Activated CD4-positive, alpha-beta T cell treated with anti-CD3 and anti-CD28 coated beads for 36 hours (primary cell): ENCODE measurements at regions of chr11 and their contacts with region 1.

Region 1: GRCh38 chr11:64778508-64779346 is at the start of gene SF1:
- DNase-seq: peak; percentile 99
- ATAC-seq: peak; percentile 91
- H3K4me3 Mint-ChIP-seq: peak within 1 kb of the TSS; percentile 97
- H3K27ac Mint-ChIP-seq: peak within 1 kb of the TSS; percentile 99
- H3K4me1 Mint-ChIP-seq: peaks cover 57% of the 10 kb centered on the region
- H3K27me3 Mint-ChIP-seq: no peaks in the 10 kb centered on the region
- total RNA-seq, gene SF1: 318 to 362 TPM

Region 2: DNA sequence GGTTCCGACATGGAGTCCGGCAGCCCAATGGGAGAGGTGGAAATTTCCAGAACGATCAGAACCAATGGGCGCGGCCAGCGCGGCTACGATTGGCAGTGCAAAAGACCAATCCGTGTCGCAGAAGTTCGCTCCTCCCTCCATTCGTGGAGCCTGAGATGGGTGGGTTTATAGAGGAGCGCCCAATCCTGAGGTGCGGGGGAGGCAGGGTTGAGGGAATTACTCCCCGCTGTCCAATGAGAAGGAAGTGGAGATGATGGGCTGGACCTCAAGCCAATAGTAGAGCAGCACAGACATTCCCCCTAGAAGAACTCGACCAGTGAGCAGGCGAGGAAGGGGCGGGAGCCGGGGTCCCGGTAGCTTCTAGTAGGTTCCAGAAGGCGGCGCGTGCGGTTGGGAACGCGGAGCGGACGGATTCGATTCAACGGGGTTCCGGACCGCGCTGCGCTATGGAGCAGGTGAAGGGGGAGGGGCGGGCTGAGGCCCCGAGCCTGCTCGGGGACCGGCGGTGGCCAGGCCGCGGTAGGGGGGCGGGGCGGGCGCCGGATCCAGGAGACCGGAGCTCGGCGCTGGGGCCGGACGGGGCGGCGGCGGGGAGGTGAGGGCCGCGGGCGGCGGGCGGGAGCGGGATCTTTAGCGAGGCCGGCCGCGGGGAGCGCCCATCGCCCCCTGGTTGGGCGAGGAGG is 592.8 kb before region 1 on chr11 and contains the start of gene STIP1:
- CTCF ChIA-PET with region 1: no interaction called
- POLR2A ChIA-PET with region 1: no interaction called
- intact Hi-C with region 1: loop called in 1 of 2 experiments (anchors 2 kb)
- DNase-seq: peak; percentile 99
- ATAC-seq: peak; percentile 92
- H3K4me3 Mint-ChIP-seq: no peak within 1 kb of the TSS
- H3K27ac Mint-ChIP-seq: peak within 1 kb of the TSS; percentile 92
- H3K4me1 Mint-ChIP-seq: peaks cover 42% of the 10 kb centered on the region
- H3K27me3 Mint-ChIP-seq: no peaks in the 10 kb centered on the region
- total RNA-seq, gene STIP1: 398 to 403 TPM

Region 3: DNA sequence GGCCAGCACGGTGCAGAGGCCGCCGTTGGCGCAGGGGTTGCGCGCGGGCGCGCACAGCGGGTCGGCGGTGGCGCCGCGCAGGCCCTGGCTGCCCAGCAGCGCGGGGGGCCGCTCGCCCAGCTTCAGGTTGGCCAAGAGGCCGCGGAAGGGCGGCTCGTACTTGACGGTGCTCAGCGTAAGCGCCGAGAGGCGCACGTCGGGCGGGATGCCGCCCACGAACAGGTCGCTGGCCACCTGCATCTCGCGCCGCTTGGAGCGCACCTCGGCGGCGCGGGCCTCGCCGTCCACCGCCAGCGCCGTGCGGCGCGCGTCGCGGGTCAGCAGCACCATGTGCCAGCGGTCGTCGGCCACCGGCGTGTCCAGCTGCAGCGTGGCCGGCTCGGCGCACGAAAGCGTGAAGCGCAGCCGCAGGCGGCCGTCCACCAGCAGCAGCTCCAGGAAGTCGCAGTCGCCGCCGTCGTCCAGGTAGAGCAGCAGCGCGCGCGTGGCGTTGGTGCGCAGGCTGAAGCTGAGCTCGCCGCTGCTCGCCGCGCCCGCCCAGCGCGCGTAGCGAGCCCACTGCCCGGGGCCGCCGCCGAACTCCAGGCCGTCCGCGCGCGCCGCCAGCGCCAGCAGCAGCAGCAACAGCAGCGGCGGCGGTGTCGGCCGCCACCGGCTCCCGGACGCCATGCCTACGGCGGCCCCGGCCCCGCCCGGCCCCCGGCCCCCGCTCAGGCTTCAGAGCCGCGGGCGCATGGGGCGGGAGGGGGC is 65.5 kb before region 1 on chr11:
- CTCF ChIA-PET with region 1: no interaction called
- POLR2A ChIA-PET with region 1: no interaction called
- intact Hi-C with region 1: no loop called
- DNase-seq: peak; percentile 38
- ATAC-seq: peak; percentile 21
- H3K4me3 Mint-ChIP-seq: no peak overlapping the region
- H3K27ac Mint-ChIP-seq: no peak overlapping the region
- H3K4me1 Mint-ChIP-seq: peaks cover 13% of the 10 kb centered on the region
- H3K27me3 Mint-ChIP-seq: peaks cover 69% of the 10 kb centered on the region

Region 4: GRCh38 chr11:64742889-64743590 is 35.7 kb before region 1 on chr11:
- CTCF ChIA-PET with region 1: interaction called, 6 read pairs
- POLR2A ChIA-PET with region 1: interaction called, 4 read pairs
- intact Hi-C with region 1: loop called in 1 of 2 experiments (anchors 1 kb)
- DNase-seq: peak; percentile 86
- ATAC-seq: peak; percentile 47
- H3K4me3 Mint-ChIP-seq: peak overlapping the region; percentile 73
- H3K27ac Mint-ChIP-seq: no peak overlapping the region
- H3K4me1 Mint-ChIP-seq: peaks cover 25% of the 10 kb centered on the region
- H3K27me3 Mint-ChIP-seq: peaks cover 5% of the 10 kb centered on the region

Region 5: DNA sequence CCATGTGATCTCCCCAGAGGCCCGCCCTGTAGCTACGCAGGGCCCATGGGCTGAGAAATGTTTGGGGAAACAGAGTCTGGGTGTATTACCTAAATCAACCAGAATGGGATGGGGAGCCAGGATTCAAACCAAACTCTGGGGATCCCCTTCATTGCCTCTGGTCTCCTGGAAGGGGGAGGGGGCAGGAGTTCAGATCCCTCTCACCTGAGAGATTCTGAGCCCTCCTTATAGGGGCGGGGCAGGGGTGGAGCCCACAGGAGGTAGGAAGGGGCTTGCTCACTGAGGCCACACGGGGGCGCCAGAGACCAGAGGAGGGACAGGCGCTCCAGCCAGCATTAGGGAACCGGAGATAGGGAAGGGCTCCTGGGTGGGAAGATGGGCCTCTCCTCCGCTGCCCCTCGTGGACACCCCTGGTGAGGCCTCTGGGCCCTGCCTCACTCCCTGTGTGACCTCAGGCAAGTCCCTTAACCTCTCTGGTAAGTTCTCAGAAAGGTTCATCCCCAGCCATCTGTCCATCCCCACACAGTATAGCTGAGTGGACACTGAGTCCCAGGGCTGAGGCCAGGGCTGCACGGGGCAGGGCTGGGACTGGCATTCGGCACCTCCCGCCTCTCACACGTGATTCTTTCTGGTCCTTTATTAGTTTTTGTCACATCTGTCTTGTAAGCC is 68.4 kb after region 1 on chr11:
- CTCF ChIA-PET with region 1: interaction called, 5 read pairs
- POLR2A ChIA-PET with region 1: no interaction called
- intact Hi-C with region 1: loop called in 1 of 2 experiments (anchors 2 kb)
- DNase-seq: peak; percentile 96
- ATAC-seq: peak; percentile 75
- H3K4me3 Mint-ChIP-seq: no peak overlapping the region
- H3K27ac Mint-ChIP-seq: no peak overlapping the region
- H3K4me1 Mint-ChIP-seq: peaks cover 54% of the 10 kb centered on the region
- H3K27me3 Mint-ChIP-seq: no peaks in the 10 kb centered on the region

Region 6: DNA sequence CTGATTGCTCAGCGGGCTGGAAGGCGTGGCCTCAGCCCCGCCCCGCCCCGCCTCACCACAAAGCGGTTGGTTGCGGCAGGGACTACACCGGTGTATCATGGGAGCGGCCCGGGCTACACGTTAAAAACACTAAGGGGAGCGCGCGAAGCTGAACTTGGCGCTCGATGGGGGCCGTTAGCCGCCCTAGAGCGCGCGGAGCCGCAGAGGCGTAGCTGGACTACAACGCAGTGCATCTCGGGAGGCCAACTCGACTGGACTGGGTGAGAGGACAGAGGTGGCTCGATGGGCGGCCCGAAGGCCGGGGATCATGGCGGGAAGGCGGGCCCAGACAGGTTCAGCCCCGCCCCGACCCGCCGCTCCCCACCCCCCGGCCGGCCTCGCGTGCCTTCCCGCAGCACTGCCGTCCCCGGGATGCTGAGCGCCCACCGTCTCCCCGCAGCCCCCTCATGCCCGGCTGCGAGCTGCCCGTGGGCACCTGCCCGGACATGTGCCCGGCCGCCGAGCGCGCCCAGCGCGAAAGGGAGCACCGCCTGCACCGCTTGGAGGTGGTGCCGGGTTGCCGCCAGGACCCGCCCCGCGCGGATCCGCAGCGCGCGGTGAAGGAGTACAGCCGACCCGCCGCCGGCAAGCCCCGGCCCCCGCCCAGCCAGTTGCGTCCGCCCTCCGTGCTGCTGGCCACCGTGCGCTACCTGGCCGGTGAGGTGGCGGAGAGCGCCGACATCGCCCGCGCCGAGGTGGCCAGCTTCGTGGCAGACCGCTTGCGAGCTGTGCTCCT is 262.3 kb after region 1 on chr11 and contains the start of gene SAC3D1:
- CTCF ChIA-PET with region 1: no interaction called
- POLR2A ChIA-PET with region 1: no interaction called
- intact Hi-C with region 1: loop called in 1 of 2 experiments (anchors 1 kb)
- DNase-seq: peak; percentile 96
- ATAC-seq: peak; percentile 95
- H3K4me3 Mint-ChIP-seq: peak within 1 kb of the TSS; percentile 86
- H3K27ac Mint-ChIP-seq: peak within 1 kb of the TSS; percentile 95
- H3K4me1 Mint-ChIP-seq: peaks cover 17% of the 10 kb centered on the region
- H3K27me3 Mint-ChIP-seq: no peaks in the 10 kb centered on the region
- total RNA-seq, gene SAC3D1: 10.5 to 12.1 TPM

Region 7: GRCh38 chr11:65261591-65262380 is 483.1 kb after region 1 on chr11 and contains the start of gene POLA2:
- CTCF ChIA-PET with region 1: no interaction called
- POLR2A ChIA-PET with region 1: no interaction called
- intact Hi-C with region 1: loop called in 1 of 2 experiments (anchors 1 kb)
- DNase-seq: peak; percentile 98
- ATAC-seq: peak; percentile 93
- H3K4me3 Mint-ChIP-seq: peak within 1 kb of the TSS; percentile 98
- H3K27ac Mint-ChIP-seq: peak within 1 kb of the TSS; percentile 96
- H3K4me1 Mint-ChIP-seq: peaks cover 50% of the 10 kb centered on the region
- H3K27me3 Mint-ChIP-seq: no peaks in the 10 kb centered on the region
- total RNA-seq, gene POLA2: 63.1 to 83.3 TPM

Region 8: DNA sequence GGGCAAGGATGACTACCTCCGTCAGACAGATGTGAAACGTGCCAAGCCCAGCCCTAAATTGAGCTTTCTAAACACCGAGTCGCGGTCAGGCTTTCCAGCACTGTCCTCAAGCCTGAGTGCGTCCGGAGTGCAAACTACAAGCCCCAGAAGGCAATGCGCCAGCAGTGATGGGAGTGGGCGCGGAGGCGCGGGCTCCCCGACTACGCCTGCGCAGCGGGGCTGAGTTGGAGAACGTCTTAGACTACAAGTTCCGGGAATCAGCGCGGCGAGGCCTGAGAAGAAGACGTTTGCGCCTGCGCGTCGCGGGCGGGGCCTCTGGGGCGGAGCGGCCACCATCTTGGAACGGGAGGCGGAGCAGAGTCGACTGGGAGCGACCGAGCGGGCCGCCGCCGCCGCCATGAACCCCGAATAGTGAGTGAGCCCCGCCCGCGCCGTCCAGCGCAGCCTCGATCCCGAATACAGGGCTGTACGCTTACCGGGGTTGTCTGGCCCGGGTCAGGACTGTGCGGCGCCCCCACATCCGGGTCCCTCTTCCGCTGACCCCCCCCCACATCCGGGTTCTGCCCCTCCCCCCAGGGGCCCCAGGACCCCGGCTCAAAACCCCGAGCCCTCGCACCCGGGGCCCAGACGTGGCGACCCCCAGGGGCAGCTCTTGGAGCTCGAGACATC is 1489.7 kb after region 1 on chr11 and contains the start of gene RAB1B:
- CTCF ChIA-PET with region 1: no interaction called
- POLR2A ChIA-PET with region 1: no interaction called
- intact Hi-C with region 1: loop called in 1 of 2 experiments (anchors 5 kb)
- DNase-seq: peak; percentile 100
- ATAC-seq: peak; percentile 88
- H3K4me3 Mint-ChIP-seq: peak within 1 kb of the TSS; percentile 100
- H3K27ac Mint-ChIP-seq: peak within 1 kb of the TSS; percentile 97
- H3K4me1 Mint-ChIP-seq: peaks cover 28% of the 10 kb centered on the region
- H3K27me3 Mint-ChIP-seq: no peaks in the 10 kb centered on the region
- total RNA-seq, gene RAB1B: 114 to 147 TPM